Activated B cell treated with CpG ODN at 0.5 μM for 24 hours (primary cell): ENCODE measurements at regions of chr11 and their contacts with region 1.

Region 1: GRCh38 chr11:17276236-17277023 is at the start of gene NUCB2:
- DNase-seq: peak; percentile 95
- ATAC-seq: peak; percentile 97
- H3K4me3 Mint-ChIP-seq: peak within 1 kb of the TSS; percentile 96
- H3K27ac Mint-ChIP-seq: peak within 1 kb of the TSS; percentile 85
- H3K4me1 Mint-ChIP-seq: peaks cover 20% of the 10 kb centered on the region
- H3K27me3 Mint-ChIP-seq: peaks cover 2% of the 10 kb centered on the region
- CTCF ChIP-seq: no peak
- total RNA-seq, gene NUCB2: 6.2 and 6.8 TPM in 2 replicates

Region 2: DNA sequence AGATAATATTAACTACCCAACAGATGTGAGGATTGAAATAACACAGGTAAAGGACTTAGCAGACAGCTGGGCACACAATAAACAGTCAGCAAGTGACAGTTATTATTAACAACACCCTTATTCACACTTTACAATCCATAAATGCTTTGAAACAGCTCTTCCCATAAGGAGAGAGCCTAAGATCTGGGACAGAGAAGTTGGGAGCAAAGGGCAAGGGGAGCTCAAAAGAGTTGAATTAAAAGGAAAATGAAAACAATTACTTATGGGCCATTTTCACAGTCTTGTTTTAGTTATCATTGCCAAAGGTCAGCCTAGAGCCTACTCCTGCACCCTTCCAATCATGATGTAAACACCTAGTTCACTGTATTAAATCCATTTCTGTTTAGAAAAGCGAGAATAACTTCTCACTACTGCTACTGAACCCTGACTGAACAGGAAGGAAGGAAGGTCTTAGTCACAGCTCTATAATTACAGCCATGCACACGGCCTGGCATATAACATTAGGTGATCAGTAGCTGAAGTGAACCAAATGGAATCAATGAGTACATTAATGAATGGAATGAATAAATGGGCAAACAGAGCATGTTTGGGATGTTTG is 373.6 kb before region 1 on chr11:
- CTCF ChIA-PET with region 1: no interaction called
- POLR2A ChIA-PET with region 1: no interaction called
- intact Hi-C with region 1: loop called (anchors 1 kb)
- DNase-seq: no peak
- ATAC-seq: peak; percentile 64
- H3K4me3 Mint-ChIP-seq: peak overlapping the region; percentile 74
- H3K27ac Mint-ChIP-seq: peak overlapping the region; percentile 92
- H3K4me1 Mint-ChIP-seq: peaks cover 33% of the 10 kb centered on the region
- H3K27me3 Mint-ChIP-seq: no peaks in the 10 kb centered on the region
- CTCF ChIP-seq: no peak

Region 3: GRCh38 chr11:17207317-17208258 is 68.8 kb before region 1 on chr11 and contains the start of gene PIK3C2A:
- CTCF ChIA-PET with region 1: interaction called, 3 read pairs
- POLR2A ChIA-PET with region 1: interaction called, 15 read pairs
- intact Hi-C with region 1: loop called (anchors 1 kb)
- DNase-seq: peak; percentile 91
- ATAC-seq: peak; percentile 95
- H3K4me3 Mint-ChIP-seq: peak within 1 kb of the TSS; percentile 99
- H3K27ac Mint-ChIP-seq: peak within 1 kb of the TSS; percentile 99
- H3K4me1 Mint-ChIP-seq: peaks cover 40% of the 10 kb centered on the region
- H3K27me3 Mint-ChIP-seq: no peaks in the 10 kb centered on the region
- CTCF ChIP-seq: no peak
- total RNA-seq, gene PIK3C2A: 35.9 and 41.2 TPM in 2 replicates

Region 4: GRCh38 chr11:17389211-17389956 is 113.0 kb after region 1 on chr11:
- CTCF ChIA-PET with region 1: interaction called, 3 read pairs
- POLR2A ChIA-PET with region 1: interaction called, 4 read pairs
- intact Hi-C with region 1: loop called (anchors 2 kb)
- DNase-seq: peak; percentile 85
- ATAC-seq: peak; percentile 90
- H3K4me3 Mint-ChIP-seq: peak overlapping the region; percentile 84
- H3K27ac Mint-ChIP-seq: peak overlapping the region; percentile 59
- H3K4me1 Mint-ChIP-seq: peaks cover 18% of the 10 kb centered on the region
- H3K27me3 Mint-ChIP-seq: no peaks in the 10 kb centered on the region
- CTCF ChIP-seq: no peak